HEK293 (cell line): ENCODE measurements at regions of chr10 and their contacts with region 1.

Region 1: GRCh38 chr10:102476466-102477141 is 25.3 kb upstream of the C10orf95 start:
- H3K4me3 ChIP-seq: no peak overlapping the region
- H3K27ac ChIP-seq: no peak overlapping the region
- H3K4me1 ChIP-seq: no peaks in the 10 kb centered on the region
- CTCF ChIP-seq: no peak

Region 2: GRCh38 chr10:102159051-102159597 is 317.5 kb before region 1 on chr10:
- CTCF ChIA-PET with region 1: no interaction called
- POLR2A ChIA-PET with region 1: no interaction called
- H3K4me3 ChIP-seq: no peak overlapping the region
- H3K27ac ChIP-seq: no peak overlapping the region
- H3K4me1 ChIP-seq: no peaks in the 10 kb centered on the region; the same call in 1 of the 2 replicates
- CTCF ChIP-seq: no peak

Region 3: DNA sequence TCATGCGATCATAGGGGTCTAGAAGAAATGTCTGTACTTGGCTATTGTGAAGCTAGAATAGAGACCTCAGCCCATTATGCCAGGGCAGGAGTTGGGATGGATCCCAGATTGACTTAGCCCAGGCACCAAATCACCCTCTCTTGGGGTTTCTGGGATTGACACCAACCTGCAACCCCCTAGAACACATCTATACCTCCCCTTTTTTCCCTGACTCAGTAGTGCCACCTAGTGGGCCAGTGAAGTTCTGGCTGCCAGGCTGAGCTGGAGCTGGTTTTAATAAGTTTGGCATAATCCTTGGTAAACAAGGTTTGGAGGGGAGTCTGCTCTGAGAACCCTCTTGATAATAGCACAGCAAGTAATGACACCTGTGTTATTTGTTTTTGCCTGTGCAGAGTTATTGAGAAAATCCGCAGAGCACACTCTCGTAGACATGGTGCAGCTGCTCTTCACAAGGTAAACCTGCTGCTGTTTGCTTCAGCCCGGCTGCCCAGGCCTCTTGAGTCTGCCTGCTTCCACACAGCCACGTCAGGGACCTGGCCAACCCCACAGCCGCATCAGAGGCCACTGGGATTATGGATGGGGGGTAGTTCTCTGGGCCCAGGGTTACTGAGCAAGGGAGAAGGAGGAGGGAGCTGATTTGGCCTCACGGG is 124.4 kb before region 1 on chr10:
- CTCF ChIA-PET with region 1: no interaction called
- POLR2A ChIA-PET with region 1: no interaction called
- H3K4me3 ChIP-seq: no peak overlapping the region
- H3K27ac ChIP-seq: no peak overlapping the region
- H3K4me1 ChIP-seq: no peaks in the 10 kb centered on the region
- CTCF ChIP-seq: peak; percentile 61; the same call in 1 of the 2 replicates

Region 4: DNA sequence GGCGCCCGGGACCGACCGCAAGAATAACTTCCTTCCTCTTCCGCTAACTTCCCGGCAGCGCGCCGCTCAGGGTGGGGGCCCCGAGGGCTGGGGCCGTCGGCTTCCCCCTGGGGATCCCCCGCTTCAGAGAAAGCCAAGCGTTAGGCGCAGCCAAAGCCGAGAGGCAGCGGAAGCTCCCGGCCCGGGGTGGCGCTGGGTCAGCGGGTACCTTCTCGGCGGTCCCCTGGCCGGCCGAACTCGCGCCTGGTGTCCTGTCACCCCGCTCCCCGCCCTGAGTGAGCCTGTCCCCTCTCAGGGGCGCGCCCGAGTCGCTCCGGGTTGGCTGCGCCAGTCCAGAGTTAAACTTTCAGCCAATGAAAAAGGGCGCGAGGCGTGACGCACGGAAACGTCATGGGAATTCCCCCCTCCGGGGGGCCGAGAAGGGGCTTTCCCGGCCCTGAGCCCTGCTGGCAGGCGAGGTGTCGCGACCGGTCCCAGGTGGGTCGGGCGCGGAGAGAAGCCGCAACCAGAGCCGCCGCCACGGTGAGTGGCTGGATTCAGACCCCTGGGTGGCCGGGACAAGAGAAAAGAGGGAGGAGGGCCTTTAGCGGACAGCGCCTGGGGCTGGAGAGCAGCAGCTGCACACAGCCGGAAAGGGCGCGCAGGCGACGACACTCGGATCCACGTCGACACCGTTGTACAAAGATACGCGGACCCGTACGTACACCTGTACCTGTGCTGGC is 82.4 kb before region 1 on chr10:
- CTCF ChIA-PET with region 1: interaction called, 18 read pairs
- POLR2A ChIA-PET with region 1: interaction called, 3 read pairs
- H3K4me3 ChIP-seq: peak overlapping the region; percentile 58
- H3K27ac ChIP-seq: no peak overlapping the region; the same call in 1 of the 2 replicates
- H3K4me1 ChIP-seq: peaks cover 5% of the 10 kb centered on the region; the same call in 1 of the 2 replicates
- CTCF ChIP-seq: peak; percentile 94

Region 5: DNA sequence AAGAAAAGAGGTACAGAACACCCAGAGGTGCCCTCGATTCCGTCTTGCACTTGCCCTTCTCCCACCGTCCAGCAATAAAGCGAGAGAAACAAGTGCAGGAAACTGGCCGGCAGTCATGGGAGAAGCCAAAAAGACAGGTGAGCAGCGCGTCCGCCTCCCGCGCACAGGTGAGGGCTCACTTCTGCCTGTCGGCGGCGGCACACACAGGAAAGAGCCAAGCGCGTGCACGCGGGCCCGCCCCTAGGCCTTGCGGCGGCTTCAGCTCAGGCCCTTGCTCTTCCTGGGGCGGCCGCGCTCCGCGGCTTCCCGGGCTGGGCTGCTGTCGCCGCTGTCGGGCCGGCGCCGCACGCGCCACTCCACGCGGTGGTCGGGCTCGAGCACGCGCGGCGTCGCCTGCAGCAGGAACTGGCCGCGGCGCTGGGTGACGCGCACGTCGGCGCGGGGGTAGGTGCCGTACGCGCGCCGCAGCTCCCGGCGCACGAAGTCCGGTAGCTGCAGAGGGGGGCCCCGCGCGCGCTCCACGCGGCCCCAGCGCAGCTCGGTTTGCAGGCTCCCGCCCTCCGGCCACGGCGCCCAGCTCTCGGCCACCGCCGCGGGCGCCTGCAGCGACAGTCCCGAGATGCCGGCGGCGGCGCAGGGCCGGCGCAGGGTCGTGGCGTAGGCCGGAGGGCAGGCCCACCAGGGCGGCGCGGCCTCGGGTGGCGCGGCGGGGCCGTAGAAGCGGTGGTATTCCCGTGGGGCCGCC is 26.2 kb before region 1 on chr10:
- CTCF ChIA-PET with region 1: interaction called, 16 read pairs
- POLR2A ChIA-PET with region 1: interaction called, 6 read pairs
- H3K4me3 ChIP-seq: peak overlapping the region; percentile 73
- H3K27ac ChIP-seq: peak overlapping the region; percentile 97
- H3K4me1 ChIP-seq: peaks cover 5% of the 10 kb centered on the region
- CTCF ChIP-seq: peak; percentile 51; the same call in 1 of the 2 replicates

Region 6: DNA sequence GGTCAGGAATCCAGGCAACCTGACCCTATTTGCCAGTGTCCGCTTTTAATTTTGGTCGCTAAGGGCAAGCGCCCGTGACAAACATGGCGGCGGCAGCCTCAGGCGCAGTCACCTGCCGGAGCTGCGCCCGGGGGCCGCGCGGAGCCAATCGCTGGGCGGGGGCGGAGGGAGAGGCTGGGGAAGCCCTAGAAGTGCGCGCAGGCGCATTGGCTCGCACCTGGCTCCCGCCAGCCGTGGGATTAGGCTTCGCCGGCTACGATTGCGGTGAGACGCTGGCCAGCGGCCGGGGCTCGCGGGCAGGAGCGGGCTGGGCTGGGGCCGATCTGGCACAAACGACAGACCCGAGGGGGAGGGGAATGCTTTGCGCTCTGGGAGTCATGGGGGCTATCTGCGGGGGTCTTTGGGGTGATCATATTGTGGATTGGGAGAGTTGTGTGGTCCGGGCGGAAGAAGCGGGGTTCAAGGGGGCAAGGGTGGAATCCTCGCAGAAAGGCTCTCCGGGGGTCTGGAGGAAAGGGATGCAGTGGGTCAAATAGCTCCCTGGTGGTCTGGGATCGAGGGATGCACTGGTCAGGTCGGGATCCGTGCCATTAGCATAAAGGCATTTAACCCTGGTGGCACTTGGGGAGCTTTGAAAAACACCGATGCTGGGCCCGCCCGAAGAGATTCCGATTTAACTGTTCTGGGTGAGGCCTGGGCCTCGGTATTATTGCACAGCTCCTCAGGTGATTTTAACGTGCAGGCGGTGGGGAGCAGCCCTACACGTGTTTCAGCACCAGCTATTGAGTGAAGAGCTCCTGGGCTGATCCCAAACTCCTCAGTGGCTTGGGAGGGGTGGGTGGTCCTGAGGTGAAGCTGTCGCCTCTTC is 15.2 kb before region 1 on chr10:
- CTCF ChIA-PET with region 1: interaction called, 17 read pairs
- POLR2A ChIA-PET with region 1: interaction called, 5 read pairs
- H3K4me3 ChIP-seq: peak overlapping the region; percentile 21
- H3K27ac ChIP-seq: no peak overlapping the region; the same call in 1 of the 2 replicates
- H3K4me1 ChIP-seq: 0 out of 2 replicates have a peak, but pooled peaks cover 2% of the 10 kb centered on the region
- CTCF ChIP-seq: no peak

Region 7: DNA sequence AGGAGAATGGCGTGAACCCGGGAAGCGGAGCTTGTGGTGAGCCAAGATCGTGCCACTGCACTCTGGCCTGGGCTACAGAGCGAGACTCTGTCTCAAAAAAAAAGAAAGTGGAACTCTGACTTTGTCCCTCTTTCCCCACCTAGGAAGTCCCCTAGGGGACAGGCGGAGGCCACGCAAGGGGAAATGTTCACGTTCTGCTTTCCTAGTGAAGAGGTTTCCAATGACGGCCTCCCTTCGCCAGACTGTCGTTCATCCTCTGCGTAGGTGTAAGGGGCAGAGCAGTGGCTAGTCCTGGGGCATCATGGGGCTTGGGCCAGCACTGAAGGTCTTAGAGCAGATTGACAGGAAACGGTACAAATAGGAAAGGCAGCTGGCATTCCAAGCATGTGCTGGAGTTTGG is 57.7 kb after region 1 on chr10:
- CTCF ChIA-PET with region 1: no interaction called
- POLR2A ChIA-PET with region 1: no interaction called
- H3K4me3 ChIP-seq: no peak overlapping the region
- H3K27ac ChIP-seq: no peak overlapping the region
- H3K4me1 ChIP-seq: no peaks in the 10 kb centered on the region
- CTCF ChIP-seq: no peak

Region 8: DNA sequence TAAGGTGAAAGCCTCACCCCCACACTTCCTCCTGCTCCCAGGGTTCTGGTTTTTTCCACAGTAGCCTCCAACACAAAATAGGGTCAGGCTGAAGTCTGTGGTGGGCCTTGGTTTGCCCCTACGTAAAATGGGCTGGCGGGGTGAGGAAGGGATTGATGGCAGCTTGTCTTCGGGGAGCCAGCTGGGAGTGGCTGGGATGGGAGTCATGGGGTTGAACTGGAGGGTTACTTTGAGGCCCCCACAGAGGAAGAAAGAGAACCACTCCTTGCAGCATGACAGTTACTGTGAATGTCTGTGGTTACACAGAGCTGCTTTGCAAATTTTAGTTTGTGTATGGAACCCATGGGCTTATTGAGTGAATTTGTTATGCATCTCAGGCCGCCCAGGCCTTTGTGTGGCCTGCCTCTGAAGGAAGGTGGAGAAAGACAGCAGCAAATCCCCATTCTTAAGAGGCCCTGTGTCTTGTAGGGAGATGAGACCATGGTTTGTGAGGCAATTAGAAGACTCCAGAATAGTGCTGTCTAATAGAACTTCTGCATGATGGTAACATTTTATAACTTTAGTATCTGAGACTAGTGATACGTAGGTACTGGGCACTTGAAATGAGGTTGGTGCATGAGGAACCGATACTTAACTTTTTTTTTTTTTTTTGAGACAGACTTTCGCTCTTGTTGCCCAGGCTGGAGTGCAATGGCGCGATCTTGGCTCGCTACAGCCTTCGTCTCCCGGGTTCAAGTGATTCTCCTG is 175.7 kb after region 1 on chr10:
- CTCF ChIA-PET with region 1: no interaction called
- POLR2A ChIA-PET with region 1: no interaction called
- H3K4me3 ChIP-seq: no peak overlapping the region
- H3K27ac ChIP-seq: no peak overlapping the region
- H3K4me1 ChIP-seq: peaks cover 8% of the 10 kb centered on the region
- CTCF ChIP-seq: no peak